ENCODE measurements at regions of chr2 and their contacts with region 1.

Region 1: GRCh38 chr2:179218848-179219594 is 45.6 kb downstream of the SESTD1 start:
- DNase-seq: peak; percentile 90
- H3K4me3 ChIP-seq: no peak overlapping the region
- H3K27ac ChIP-seq: no peak overlapping the region
- H3K4me1 ChIP-seq: no peaks in the 10 kb centered on the region
- H3K27me3 ChIP-seq: no peaks in the 10 kb centered on the region
- CTCF ChIP-seq: peak; percentile 82 to 85
- POLR2A ChIP-seq: no peak

Region 2: GRCh38 chr2:178796079-178796677 is 422.8 kb before region 1 on chr2:
- CTCF ChIA-PET with region 1: interaction called, 6 read pairs
- POLR2A ChIA-PET with region 1: no interaction called
- dilution Hi-C with region 1: no loop called
- intact Hi-C with region 1: loop called (anchors 5 kb)
- DNase-seq: peak; percentile 71
- H3K4me3 ChIP-seq: no peak overlapping the region
- H3K27ac ChIP-seq: no peak overlapping the region
- H3K4me1 ChIP-seq: no peaks in the 10 kb centered on the region
- H3K27me3 ChIP-seq: peaks cover 0 to 2% of the 10 kb centered on the region in 2 experiments
- CTCF ChIP-seq: peak; percentile 12 to 25
- POLR2A ChIP-seq: no peak

Region 3: DNA sequence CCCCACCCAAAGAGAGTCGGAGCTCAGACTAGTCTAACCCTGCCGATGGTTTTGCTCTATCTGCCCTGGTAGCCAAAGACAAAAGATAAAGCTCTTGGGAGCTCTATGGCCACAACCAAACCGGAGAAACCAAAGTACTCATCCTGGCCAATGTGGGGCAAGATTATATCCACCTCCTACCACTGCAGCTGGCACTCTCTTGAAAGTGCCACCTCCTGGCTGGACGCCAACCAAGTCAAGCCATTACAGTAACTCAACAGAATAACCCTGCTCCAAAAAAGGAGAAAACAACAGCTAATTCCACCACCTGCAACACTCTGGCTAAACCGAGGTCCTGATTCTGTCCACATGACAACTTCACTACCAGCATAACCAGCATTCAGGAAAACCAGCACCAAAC is 12.0 kb before region 1 on chr2:
- CTCF ChIA-PET with region 1: interaction called, 14 read pairs
- POLR2A ChIA-PET with region 1: no interaction called
- dilution Hi-C with region 1: no loop called
- intact Hi-C with region 1: no loop called
- DNase-seq: no peak
- H3K4me3 ChIP-seq: no peak overlapping the region
- H3K27ac ChIP-seq: no peak overlapping the region
- H3K4me1 ChIP-seq: no peaks in the 10 kb centered on the region
- H3K27me3 ChIP-seq: no peaks in the 10 kb centered on the region
- CTCF ChIP-seq: no peak
- POLR2A ChIP-seq: no peak

Region 4: DNA sequence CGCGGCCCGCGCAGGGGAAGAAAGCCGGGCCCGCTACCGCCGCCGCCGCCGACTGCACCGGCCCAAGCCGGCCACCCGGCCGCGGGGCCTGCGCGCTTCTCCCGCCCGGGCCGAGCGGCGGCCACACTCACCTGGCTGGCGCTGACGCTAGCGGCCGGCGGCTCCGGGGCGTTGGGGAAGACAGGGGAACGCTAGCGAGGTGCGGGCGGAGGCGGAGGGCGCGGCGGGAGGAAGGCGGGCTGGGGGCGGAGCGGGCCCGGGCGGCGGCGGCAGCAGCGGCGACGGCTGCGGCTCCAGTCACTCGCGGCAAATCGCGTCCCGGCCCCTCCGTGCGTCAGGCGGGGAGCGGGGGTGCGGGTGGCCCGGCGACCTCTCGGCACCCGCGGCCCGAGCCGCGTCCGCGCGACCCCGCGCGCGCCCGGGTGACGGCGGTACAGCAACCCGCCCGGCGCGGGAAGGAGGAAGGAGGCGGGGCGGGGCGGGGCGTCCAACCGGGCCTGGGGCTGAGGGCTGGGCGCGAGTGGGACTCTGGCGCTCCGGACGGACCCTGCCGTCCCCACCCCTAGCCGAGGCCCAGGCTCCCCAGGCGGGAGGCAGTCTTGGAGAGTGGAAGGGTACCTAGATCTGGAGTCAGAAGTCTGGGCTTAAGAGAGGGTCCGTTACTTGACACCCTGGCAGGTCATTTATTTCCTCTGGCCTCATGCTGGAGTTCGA is 45.5 kb after region 1 on chr2 and contains the start of gene SESTD1:
- CTCF ChIA-PET with region 1: interaction called, 8 read pairs
- POLR2A ChIA-PET with region 1: no interaction called
- dilution Hi-C with region 1: no loop called
- intact Hi-C with region 1: loop called (anchors 1 kb)
- DNase-seq: peak; percentile 56
- H3K4me3 ChIP-seq: peak within 1 kb of the TSS; percentile 68 to 85 (median 76)
- H3K27ac ChIP-seq: peak within 1 kb of the TSS; percentile 31
- H3K4me1 ChIP-seq: peaks cover 22% of the 10 kb centered on the region
- H3K27me3 ChIP-seq: no peaks in the 10 kb centered on the region
- CTCF ChIP-seq: no peak
- POLR2A ChIP-seq: peak; percentile 40
- total RNA-seq, gene SESTD1: 72.4 and 79.9 TPM in 2 replicates

Region 5: GRCh38 chr2:179340668-179341067 is 121.6 kb after region 1 on chr2:
- CTCF ChIA-PET with region 1: interaction called, 13 read pairs
- POLR2A ChIA-PET with region 1: no interaction called
- dilution Hi-C with region 1: no loop called
- intact Hi-C with region 1: loop called (anchors 1 kb)
- DNase-seq: peak; percentile 47
- H3K4me3 ChIP-seq: no peak overlapping the region
- H3K27ac ChIP-seq: no peak overlapping the region
- H3K4me1 ChIP-seq: no peaks in the 10 kb centered on the region
- H3K27me3 ChIP-seq: no peaks in the 10 kb centered on the region
- CTCF ChIP-seq: peak in 1 of 2 donors; percentile 26
- POLR2A ChIP-seq: no peak

Region 6: DNA sequence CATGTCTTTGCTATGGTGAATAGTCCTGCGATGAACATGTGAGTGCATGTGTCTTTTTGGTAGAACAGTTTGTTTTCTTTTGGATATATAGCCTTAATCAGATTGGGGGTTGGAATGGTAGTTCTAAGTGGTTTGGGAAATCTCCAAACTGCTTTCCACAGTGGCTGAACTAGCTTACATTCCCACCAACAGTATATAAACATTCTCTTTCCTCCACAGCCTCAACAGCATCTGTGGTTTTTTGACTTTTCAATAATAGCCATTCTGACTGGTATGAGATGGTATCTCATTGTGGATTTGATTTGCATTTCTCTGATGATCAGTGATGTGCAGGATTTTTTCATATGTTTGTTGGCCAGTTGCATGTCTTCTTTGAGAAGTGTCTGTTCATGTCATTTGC is 157.9 kb after region 1 on chr2:
- CTCF ChIA-PET with region 1: no interaction called
- POLR2A ChIA-PET with region 1: no interaction called
- dilution Hi-C with region 1: no loop called
- intact Hi-C with region 1: no loop called
- DNase-seq: no peak
- H3K4me3 ChIP-seq: no peak overlapping the region
- H3K27ac ChIP-seq: no peak overlapping the region
- H3K4me1 ChIP-seq: no peaks in the 10 kb centered on the region
- H3K27me3 ChIP-seq: no peaks in the 10 kb centered on the region
- CTCF ChIP-seq: no peak
- POLR2A ChIP-seq: no peak

Region 7: DNA sequence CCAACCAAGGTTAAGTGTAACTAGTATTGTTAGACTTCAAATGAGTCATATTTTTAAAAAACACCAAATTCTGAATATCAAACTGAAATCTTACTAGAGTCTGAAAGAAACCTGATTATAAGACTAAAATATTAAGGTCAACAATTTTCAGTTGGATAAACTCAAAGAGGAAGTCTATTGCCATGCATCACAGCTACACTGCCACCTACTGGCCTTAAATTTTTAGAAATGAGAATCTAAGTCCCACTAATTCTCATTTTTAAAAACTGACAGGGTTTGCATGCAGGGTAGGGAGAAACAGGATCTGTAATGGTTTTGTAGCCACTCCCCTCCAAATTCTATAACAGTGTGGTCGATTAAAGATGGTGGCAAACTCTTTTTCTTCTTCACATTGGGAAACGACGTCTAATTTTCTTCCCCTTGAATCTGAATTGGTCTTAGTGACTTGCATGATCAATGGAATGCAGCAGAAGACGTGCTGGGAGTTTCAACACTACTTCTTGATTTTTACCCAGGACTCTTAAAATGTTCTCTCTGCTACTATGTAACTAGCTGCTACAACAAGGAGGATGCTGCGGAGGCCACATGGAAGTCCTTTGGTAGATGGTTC is 221.7 kb after region 1 on chr2:
- CTCF ChIA-PET with region 1: interaction called, 3 read pairs
- POLR2A ChIA-PET with region 1: no interaction called
- dilution Hi-C with region 1: no loop called
- intact Hi-C with region 1: loop called (anchors 1 kb)
- DNase-seq: no peak
- H3K4me3 ChIP-seq: no peak overlapping the region
- H3K27ac ChIP-seq: no peak overlapping the region
- H3K4me1 ChIP-seq: no peaks in the 10 kb centered on the region
- H3K27me3 ChIP-seq: peaks cover 0 to 2% of the 10 kb centered on the region in 2 experiments
- CTCF ChIP-seq: peak; percentile 51 to 57
- POLR2A ChIP-seq: no peak

Region 8: DNA sequence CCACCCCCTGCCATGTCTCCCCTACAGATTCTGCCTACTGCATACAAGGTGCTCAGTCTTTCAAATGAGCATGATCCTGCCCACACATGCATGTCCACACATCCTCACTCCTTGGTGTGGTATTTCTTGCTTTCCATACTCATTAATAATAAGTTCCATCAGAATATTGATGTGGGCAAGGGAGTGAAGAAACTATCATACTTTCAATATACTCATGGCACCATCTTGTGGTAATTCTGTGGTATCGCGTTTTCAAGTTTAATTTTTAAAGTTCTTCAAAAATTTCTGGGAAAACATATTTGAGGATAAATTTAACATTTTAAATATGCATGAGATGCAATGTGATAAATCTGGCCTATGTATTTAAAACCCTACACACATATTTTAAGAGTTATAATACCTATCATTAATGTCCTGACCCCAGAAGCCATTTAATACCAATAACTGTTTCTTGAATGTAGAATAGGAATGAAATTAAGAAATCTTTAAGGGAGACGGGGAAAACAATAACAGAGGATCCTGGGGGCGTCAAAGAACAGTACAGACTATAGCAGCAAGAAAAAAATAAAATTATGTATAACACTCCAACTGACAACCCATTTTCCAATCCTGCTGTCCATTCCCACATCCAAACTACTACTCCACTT is 532.3 kb after region 1 on chr2:
- CTCF ChIA-PET with region 1: interaction called, 7 read pairs
- POLR2A ChIA-PET with region 1: no interaction called
- dilution Hi-C with region 1: no loop called
- intact Hi-C with region 1: loop called (anchors 1 kb)
- DNase-seq: peak; percentile 42
- H3K4me3 ChIP-seq: no peak overlapping the region
- H3K27ac ChIP-seq: no peak overlapping the region
- H3K4me1 ChIP-seq: no peaks in the 10 kb centered on the region
- H3K27me3 ChIP-seq: no peaks in the 10 kb centered on the region
- CTCF ChIP-seq: peak; percentile 34 to 36
- POLR2A ChIP-seq: no peak